Naive thymus-derived CD4-positive, alpha-beta T cell (primary cell): ENCODE measurements at regions of chr4 and their contacts with region 1.

Region 1: DNA sequence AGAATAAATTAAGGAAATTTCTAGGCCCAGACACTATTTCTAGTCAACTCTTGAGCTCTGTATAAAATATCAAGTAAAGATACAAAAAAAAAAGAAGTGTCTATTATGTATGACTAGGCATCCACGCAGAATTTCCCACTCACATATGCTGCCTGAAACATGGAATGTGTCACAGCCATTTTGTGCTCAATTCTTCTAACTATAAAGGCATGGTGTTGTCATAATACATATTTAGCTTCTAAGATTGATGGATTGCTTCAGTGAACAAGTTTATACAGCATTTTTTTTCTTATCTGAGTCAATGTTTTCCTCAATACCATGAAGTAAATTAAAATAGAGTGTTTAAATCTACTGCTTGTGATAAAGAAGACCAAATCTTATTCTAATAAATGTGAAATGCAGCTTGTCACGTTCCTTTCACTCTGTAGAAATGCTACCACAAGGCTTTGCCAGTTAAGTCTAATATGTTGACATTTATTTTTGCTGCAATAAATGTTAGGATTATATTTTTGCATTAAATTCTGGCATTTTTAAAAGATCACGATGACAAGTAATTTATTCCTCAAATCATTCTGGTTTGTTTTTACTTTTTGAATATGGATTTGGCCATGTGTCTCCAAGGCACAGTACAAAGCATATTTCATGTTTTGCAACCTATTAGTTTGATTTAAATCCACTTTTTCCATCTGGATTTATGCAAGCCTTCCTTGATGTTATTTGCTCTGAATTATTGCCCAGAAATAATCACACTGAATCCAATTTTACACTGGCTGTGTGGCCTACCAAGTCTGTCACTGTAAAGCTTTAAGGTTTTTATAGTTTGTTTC is 1829.0 kb upstream of the PCDH7 start:
- DNase-seq: no peak
- ATAC-seq: no peak
- H3K4me3 ChIP-seq: no peak overlapping the region
- H3K4me3 Mint-ChIP-seq: no peak overlapping the region
- H3K27ac ChIP-seq: no peak overlapping the region
- H3K27ac Mint-ChIP-seq: no peak overlapping the region
- H3K4me1 ChIP-seq: no peaks in the 10 kb centered on the region
- H3K4me1 Mint-ChIP-seq: no peaks in the 10 kb centered on the region
- H3K27me3 ChIP-seq: no peaks in the 10 kb centered on the region
- H3K27me3 Mint-ChIP-seq: no peaks in the 10 kb centered on the region

Region 2: DNA sequence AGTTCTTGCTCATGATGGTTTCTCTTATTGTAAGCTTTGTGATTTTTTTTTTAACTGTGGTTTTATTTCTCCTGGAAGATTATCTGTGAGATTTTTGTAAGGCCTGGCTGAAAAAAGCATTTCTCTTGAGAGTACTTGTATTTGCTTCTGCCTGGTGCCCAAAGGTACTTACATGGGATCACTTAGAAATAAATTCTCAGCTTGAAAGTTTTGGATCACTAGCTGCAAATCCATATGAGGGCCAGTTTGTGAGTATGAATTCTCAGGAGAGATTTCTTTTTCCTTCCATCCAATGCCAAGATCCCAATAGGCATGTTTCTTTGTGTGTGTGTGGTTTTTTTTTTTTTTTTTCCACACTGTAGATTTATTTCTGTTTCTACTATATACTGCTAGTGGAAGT is 55.7 kb before region 1 on chr4:
- CTCF ChIA-PET with region 1: no interaction called
- POLR2A ChIA-PET with region 1: no interaction called
- intact Hi-C with region 1: loop called in 1 of 2 experiments (anchors 10 kb)
- DNase-seq: no peak
- ATAC-seq: no peak
- H3K4me3 ChIP-seq: no peak overlapping the region
- H3K4me3 Mint-ChIP-seq: no peak overlapping the region
- H3K27ac ChIP-seq: no peak overlapping the region
- H3K27ac Mint-ChIP-seq: no peak overlapping the region
- H3K4me1 ChIP-seq: no peaks in the 10 kb centered on the region
- H3K4me1 Mint-ChIP-seq: no peaks in the 10 kb centered on the region
- H3K27me3 ChIP-seq: no peaks in the 10 kb centered on the region
- H3K27me3 Mint-ChIP-seq: no peaks in the 10 kb centered on the region